ENCODE measurements at regions of chr1 and their contacts with region 1.

Region 1: GRCh38 chr1:172837816-172838680 is 179.1 kb downstream of the FASLG start:
- DNase-seq: peak; percentile 41
- ATAC-seq: peak; percentile 97
- H3K4me3 Mint-ChIP-seq: no peak overlapping the region
- H3K27ac Mint-ChIP-seq: no peak overlapping the region
- H3K4me1 Mint-ChIP-seq: peaks cover 34% of the 10 kb centered on the region
- H3K27me3 Mint-ChIP-seq: peaks cover 18% of the 10 kb centered on the region
- CTCF ChIP-seq: no peak

Region 2: DNA sequence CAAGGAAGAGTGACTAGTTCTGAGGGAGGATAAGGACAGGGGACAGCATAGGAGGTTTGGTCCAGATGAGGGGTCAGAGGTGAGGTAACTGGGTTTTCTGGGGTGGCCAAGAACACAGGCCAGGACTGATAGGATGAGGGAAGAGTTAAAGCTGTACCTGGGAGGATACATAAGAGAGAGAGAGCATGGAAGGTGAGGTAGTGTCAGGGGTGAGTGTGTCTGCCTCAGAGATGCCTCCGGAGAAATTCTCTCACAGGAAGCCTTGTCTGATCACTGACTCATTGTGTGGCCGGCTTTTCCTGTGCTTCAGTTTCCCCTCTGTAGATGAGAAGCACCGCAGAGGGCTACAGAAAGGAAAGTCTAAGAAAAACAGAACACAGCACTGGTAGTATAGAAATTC is 138.9 kb before region 1 on chr1:
- CTCF ChIA-PET with region 1: no interaction called
- POLR2A ChIA-PET with region 1: no interaction called
- intact Hi-C with region 1: no loop called
- DNase-seq: peak; percentile 87
- ATAC-seq: peak; percentile 80
- H3K4me3 Mint-ChIP-seq: peak overlapping the region; percentile 50
- H3K27ac Mint-ChIP-seq: peak overlapping the region; percentile 95
- H3K4me1 Mint-ChIP-seq: peaks cover 54% of the 10 kb centered on the region
- H3K27me3 Mint-ChIP-seq: no peaks in the 10 kb centered on the region
- CTCF ChIP-seq: no peak

Region 3: GRCh38 chr1:172818841-172819527 is 19.1 kb before region 1 on chr1:
- CTCF ChIA-PET with region 1: interaction called, 3 read pairs
- POLR2A ChIA-PET with region 1: no interaction called
- intact Hi-C with region 1: loop called (anchors 1 kb)
- DNase-seq: peak; percentile 88
- ATAC-seq: peak; percentile 97
- H3K4me3 Mint-ChIP-seq: peak overlapping the region; percentile 43
- H3K27ac Mint-ChIP-seq: peak overlapping the region; percentile 83
- H3K4me1 Mint-ChIP-seq: peaks cover 47% of the 10 kb centered on the region
- H3K27me3 Mint-ChIP-seq: peaks cover 14% of the 10 kb centered on the region
- CTCF ChIP-seq: no peak

Region 4: GRCh38 chr1:172870901-172871606 is 33.0 kb after region 1 on chr1:
- CTCF ChIA-PET with region 1: no interaction called
- POLR2A ChIA-PET with region 1: no interaction called
- intact Hi-C with region 1: loop called (anchors 5 kb)
- DNase-seq: peak; percentile 35
- ATAC-seq: peak; percentile 74
- H3K4me3 Mint-ChIP-seq: no peak overlapping the region
- H3K27ac Mint-ChIP-seq: no peak overlapping the region
- H3K4me1 Mint-ChIP-seq: peaks cover 43% of the 10 kb centered on the region
- H3K27me3 Mint-ChIP-seq: peaks cover 1% of the 10 kb centered on the region
- CTCF ChIP-seq: no peak

Region 5: GRCh38 chr1:172966844-172967540 is 128.9 kb after region 1 on chr1:
- CTCF ChIA-PET with region 1: no interaction called
- POLR2A ChIA-PET with region 1: no interaction called
- intact Hi-C with region 1: loop called (anchors 1 kb)
- DNase-seq: peak; percentile 21
- ATAC-seq: peak; percentile 80
- H3K4me3 Mint-ChIP-seq: no peak overlapping the region
- H3K27ac Mint-ChIP-seq: no peak overlapping the region
- H3K4me1 Mint-ChIP-seq: peaks cover 19% of the 10 kb centered on the region
- H3K27me3 Mint-ChIP-seq: peaks cover 1% of the 10 kb centered on the region
- CTCF ChIP-seq: no peak

Measured in activated CD8-positive, alpha-beta T cell treated with anti-CD3 and anti-CD28 coated beads for 36 hours (primary cell).